GM10248 (cell line): ENCODE measurements at regions of chr1 and their contacts with region 1.

Region 1: DNA sequence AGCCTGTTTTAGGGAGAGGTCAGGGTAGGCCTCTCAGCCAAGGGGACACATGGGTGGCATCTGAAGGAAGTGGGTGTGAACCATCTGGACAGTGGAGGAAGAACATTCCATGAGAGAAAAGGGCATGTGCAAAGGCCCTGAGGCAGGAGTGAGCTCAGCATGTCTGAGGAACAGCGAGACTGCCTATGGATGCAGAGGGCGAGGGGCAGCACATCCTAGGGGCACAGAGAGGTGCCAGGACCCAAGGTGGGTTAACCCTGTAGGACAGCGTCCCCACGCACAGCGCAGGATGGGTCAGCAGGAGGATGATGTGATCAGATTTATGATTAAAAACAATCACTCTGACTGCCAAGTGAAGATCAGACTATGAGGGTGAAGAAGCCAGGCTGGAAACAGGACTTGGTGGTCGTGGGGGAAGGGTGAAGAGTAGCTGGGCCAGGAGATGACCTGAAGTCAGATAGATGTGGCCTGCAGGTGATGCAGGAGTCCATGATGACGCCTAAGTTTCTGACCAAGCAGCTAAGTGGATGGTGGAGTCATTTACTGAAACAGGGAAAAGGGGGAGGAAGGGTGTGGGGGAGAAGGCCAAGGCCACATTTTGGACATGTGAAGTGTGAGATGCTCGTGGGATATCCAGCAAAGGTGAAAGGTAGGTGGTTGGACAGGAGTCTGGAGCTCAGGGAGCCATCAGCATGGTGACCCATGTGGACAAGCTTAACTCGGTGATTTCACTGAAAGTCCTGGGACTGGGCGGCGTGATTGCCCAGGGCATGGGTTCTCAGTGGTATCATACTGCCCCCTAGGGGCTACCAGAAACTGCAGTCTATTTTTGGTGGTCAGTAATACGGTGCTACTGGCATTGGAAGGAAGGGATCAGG is 37.8 kb downstream of the PABPC4 start:
- DNase-seq: peak; percentile 82
- CTCF ChIP-seq: peak; percentile 77

Region 2: GRCh38 chr1:39220891-39221870 is 317.6 kb before region 1 on chr1:
- CTCF ChIA-PET with region 1: no interaction called
- POLR2A ChIA-PET with region 1: no interaction called
- DNase-seq: no peak
- CTCF ChIP-seq: no peak

Region 3: DNA sequence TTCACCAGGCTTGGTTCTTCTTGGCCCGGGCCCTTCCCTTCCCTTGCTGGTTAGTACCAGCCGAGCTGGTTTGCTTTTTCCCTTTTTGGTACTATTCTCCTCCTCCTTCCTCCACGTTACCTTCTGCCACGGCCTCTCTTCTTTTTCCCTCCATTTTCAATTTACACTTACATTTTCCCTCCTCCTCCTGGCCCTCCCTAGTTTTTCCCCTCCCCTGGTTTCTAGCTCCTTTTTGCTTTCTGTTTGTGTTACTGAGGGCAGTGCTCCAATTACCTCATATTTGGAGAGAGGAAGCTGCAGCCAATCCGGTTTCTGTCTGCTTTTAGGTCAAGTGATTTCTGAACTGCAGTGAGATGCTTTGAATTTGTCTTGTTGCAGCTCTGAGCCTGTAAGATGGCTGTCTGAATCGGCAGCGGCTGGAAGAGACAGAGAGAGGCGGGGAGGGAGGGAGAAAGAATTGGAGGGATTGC is 270.7 kb before region 1 on chr1:
- CTCF ChIA-PET with region 1: interaction called, 24 read pairs
- POLR2A ChIA-PET with region 1: no interaction called
- DNase-seq: peak; percentile 65
- CTCF ChIP-seq: no peak

Region 4: DNA sequence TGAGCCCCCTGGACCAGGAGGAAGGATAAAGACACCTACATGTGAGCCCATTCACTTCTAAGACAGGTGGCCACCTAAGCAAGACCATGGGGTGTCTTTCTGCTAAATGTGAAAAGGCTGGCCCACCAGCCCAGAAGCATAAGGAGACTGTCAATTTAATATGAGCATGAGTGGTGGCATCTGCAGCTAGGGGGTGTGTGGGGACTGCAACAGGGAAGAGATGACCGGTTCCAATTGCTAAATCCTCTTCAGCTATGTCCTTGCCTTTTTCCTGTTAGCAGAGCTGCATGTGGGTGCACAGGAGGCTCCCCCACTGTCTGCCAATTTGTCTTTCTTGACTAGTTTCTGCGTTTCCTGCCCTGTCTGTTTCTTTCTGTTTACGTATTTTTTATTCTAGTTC is 69.7 kb before region 1 on chr1:
- CTCF ChIA-PET with region 1: interaction called, 17 read pairs
- POLR2A ChIA-PET with region 1: no interaction called
- DNase-seq: no peak
- CTCF ChIP-seq: no peak

Region 5: DNA sequence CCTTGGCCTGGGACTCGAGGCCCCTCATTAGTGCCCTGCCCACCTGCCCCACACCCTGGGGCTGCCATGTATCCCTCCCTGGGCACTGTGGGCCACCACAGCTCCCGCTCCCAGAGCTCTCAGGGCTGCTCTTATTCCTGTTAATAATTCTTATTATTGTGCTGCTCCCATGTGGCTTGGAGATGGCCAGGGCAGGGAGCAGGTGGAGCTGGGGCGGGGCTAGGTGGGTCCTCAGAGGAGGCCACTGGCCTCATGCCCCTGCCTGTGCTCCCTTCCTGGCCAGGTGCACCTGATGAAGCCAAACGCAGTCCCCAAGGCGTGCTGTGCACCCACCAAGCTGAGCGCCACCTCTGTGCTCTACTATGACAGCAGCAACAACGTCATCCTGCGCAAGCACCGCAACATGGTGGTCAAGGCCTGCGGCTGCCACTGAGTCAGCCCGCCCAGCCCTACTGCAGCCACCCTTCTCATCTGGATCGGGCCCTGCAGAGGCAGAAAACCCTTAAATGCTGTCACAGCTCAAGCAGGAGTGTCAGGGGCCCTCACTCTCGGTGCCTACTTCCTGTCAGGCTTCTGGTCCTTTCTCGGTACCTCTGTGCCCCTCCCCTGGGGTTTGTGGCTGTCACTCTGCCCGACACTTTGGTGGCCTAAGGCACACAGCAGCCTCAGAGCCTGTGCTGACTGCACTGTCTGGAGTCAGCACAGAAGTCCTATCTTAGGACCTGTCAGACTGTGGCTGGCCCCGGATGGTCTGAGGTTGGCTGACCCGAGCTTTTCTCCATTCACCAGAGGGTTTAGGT is 13.3 kb before region 1 on chr1:
- CTCF ChIA-PET with region 1: interaction called, 54 read pairs
- POLR2A ChIA-PET with region 1: no interaction called
- DNase-seq: peak; percentile 78
- CTCF ChIP-seq: no peak

Region 6: DNA sequence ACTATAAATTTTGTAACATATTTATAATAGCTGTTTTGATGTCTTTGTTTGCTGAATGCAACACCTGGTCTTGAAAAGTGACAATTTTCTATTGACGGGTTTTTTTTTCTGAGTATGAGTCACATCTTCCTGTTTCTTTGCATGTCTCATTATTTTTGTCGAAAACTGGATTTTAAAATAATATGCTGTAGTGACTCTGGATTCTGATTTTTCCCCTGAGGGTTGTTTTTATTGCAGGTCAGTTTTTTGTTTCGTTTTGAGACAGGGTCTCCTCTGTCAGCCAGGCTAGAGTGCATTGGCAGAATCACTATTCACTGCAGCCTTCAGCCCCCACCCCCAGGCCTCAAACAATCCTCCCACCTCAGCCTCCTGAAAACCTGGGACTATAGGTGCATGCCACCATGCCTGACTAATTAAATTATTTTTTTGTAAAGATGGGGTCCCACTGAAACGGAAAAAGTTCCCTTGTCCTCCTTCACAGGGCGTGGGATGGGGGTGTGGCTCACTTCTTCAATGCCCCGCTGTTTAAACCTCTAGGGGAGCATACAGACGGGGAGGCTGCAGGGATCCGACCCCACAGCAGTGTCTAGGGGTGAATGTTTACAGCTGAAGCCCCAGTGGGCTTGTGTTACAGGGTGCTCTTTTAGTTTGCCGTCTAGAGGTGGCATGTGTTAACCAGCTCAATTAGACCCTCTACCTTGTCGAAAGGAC is 188.5 kb after region 1 on chr1:
- CTCF ChIA-PET with region 1: no interaction called
- POLR2A ChIA-PET with region 1: no interaction called
- DNase-seq: peak; percentile 55
- CTCF ChIP-seq: no peak